GM12878 (cell line): ENCODE measurements at regions of chr13 and their contacts with region 1.

Region 1: DNA sequence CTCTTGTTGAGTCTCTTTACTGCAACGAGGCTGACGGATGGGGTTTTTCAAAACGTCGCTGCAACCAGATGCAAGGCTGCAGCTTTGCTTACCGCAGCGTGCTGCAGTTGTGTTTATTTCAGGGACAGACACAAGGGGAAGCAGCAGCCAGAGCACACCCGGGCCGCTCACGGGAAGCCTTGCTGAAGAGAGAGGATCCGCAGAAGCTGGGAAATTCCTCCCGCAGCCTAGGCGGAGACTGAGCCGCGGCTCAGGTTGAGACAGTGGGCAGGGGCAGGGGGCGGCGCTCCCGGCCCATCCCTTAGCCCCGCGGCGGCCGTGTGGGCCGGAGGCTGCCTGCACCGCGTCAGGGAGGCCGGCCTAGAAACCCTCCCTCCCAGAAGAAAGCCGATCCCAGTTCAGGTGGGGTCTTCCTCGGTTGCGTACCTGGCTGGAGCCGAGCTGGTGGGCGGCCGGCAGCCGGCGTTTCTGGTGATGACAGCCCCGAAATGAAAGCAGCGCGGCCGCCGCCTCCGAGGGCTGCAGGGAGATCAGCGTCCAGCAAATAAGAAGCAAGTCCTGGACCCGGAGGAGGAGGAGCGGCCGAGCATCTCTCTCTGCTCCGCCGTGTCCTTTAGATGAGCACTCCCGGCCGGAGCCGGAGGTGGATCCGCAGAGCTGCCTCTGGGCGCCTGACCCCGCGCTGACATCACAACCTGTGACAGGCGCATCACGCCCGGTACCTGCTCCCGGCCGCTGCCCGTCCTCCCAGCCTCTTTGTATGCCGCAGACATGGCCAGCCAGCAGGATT is at the start of gene FRY:
- DNase-seq: no peak
- ATAC-seq: peak; percentile 88
- H3K4me3 ChIP-seq: peak within 1 kb of the TSS; percentile 72
- H3K27ac ChIP-seq: no peak within 1 kb of the TSS
- H3K4me1 ChIP-seq: no peaks in the 10 kb centered on the region
- H3K27me3 ChIP-seq: no peaks in the 10 kb centered on the region
- CTCF ChIP-seq: peak in 1 of 3 experiments; percentile 14; a peak in 2 of 6 replicates
- EP300 ChIP-seq: 0 out of 4 replicates have a peak, but pooled peaks of 1 of the 2 experiments have one; percentile 8
- POLR2A ChIP-seq: no peak
- RAD21 ChIP-seq: peak; percentile 8; the same call in 1 of the 2 replicates
- polyA plus RNA-seq, gene FRY: 0.18 to 0.31 TPM

Region 2: GRCh38 chr13:31846182-31846950 is 184.9 kb before region 1 on chr13:
- CTCF ChIA-PET with region 1: no interaction called
- POLR2A ChIA-PET with region 1: no interaction called
- RAD21 ChIA-PET with region 1: no interaction called
- SMC1A ChIA-PET with region 1: no interaction called
- in situ Hi-C with region 1: no loop called
- intact Hi-C with region 1: no loop called
- DNase-seq: peak; percentile 27
- ATAC-seq: peak; percentile 98
- H3K4me3 ChIP-seq: peak overlapping the region; percentile 77
- H3K27ac ChIP-seq: no peak overlapping the region
- H3K4me1 ChIP-seq: no peaks in the 10 kb centered on the region
- H3K27me3 ChIP-seq: peaks cover 0 to 9% of the 10 kb centered on the region in 2 experiments; a peak in 3 of 4 replicates
- CTCF ChIP-seq: no peak
- EP300 ChIP-seq: no peak
- POLR2A ChIP-seq: no peak
- RAD21 ChIP-seq: no peak

Region 3: GRCh38 chr13:32041429-32041828 is 10.2 kb after region 1 on chr13:
- CTCF ChIA-PET with region 1: interaction called, 4 read pairs
- POLR2A ChIA-PET with region 1: no interaction called
- RAD21 ChIA-PET with region 1: no interaction called
- SMC1A ChIA-PET with region 1: interaction called, 11 read pairs
- in situ Hi-C with region 1: no loop called
- intact Hi-C with region 1: no loop called
- DNase-seq: peak; percentile 49
- ATAC-seq: peak; percentile 91
- H3K4me3 ChIP-seq: no peak overlapping the region
- H3K27ac ChIP-seq: no peak overlapping the region; the same call in 1 of the 2 replicates
- H3K4me1 ChIP-seq: peaks cover 4% of the 10 kb centered on the region; the same call in 1 of the 2 replicates
- H3K27me3 ChIP-seq: no peaks in the 10 kb centered on the region
- CTCF ChIP-seq: no peak
- EP300 ChIP-seq: no peak
- POLR2A ChIP-seq: no peak
- RAD21 ChIP-seq: no peak